Naive thymus-derived CD4-positive, alpha-beta T cell (primary cell): ENCODE measurements at regions of chr1 and their contacts with region 1.

Region 1: GRCh38 chr1:84143796-84144565 is at the start of gene PRKACB:
- DNase-seq: peak in 7 of 9 donors; percentile 59 to 79 (median 70)
- ATAC-seq: peak; percentile 94
- H3K4me3 ChIP-seq: peak within 1 kb of the TSS; percentile 71
- H3K4me3 Mint-ChIP-seq: peak within 1 kb of the TSS; percentile 88 to 100 (median 96)
- H3K27ac ChIP-seq: peak within 1 kb of the TSS; percentile 74
- H3K27ac Mint-ChIP-seq: peak within 1 kb of the TSS; percentile 97 to 100 (median 99)
- H3K4me1 ChIP-seq: peaks cover 27 to 33% of the 10 kb centered on the region in 2 donors
- H3K4me1 Mint-ChIP-seq: peaks cover 17 to 51% (median 39%) of the 10 kb centered on the region in 7 donors
- H3K27me3 ChIP-seq: no peaks in the 10 kb centered on the region
- H3K27me3 Mint-ChIP-seq: no peaks in the 10 kb centered on the region
- total RNA-seq, gene PRKACB: 71.1 to 176 (median 89.3) TPM

Region 2: DNA sequence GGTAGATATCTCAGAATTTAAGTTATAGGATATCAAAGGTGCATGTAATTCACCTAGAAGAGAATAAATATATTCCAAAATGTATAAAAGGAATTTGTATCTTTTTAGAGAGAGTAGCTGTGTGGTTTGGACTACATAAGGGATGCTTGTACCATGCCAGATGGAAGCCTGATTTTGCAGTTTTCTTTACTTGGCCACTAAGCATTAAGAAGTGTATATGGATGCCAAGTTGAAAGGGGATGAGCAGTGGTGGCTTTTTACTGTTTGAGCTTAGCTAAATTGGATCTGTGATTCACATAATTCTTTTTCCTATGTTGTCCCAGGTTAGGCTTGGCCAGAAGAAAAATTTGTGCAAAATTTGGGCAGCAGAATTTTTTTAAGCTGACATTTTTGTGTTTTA is 101.5 kb before region 1 on chr1:
- CTCF ChIA-PET with region 1: no interaction called
- POLR2A ChIA-PET with region 1: no interaction called
- intact Hi-C with region 1: no loop called
- DNase-seq: no peak
- ATAC-seq: no peak
- H3K4me3 ChIP-seq: no peak overlapping the region
- H3K4me3 Mint-ChIP-seq: no peak overlapping the region
- H3K27ac ChIP-seq: no peak overlapping the region
- H3K27ac Mint-ChIP-seq: no peak overlapping the region
- H3K4me1 ChIP-seq: no peaks in the 10 kb centered on the region
- H3K4me1 Mint-ChIP-seq: peaks cover 0 to 2% (median 0%) of the 10 kb centered on the region in 7 donors
- H3K27me3 ChIP-seq: no peaks in the 10 kb centered on the region
- H3K27me3 Mint-ChIP-seq: peaks cover 0 to 17% (median 4%) of the 10 kb centered on the region in 5 donors

Region 3: GRCh38 chr1:84156210-84156621 is 12.2 kb after region 1 on chr1:
- CTCF ChIA-PET with region 1: interaction called, 3 read pairs
- POLR2A ChIA-PET with region 1: interaction called, 4 read pairs
- intact Hi-C with region 1: loop called in 1 of 2 experiments (anchors 1 kb)
- DNase-seq: no peak
- ATAC-seq: peak; percentile 67
- H3K4me3 ChIP-seq: no peak overlapping the region
- H3K4me3 Mint-ChIP-seq: peak overlapping the region in 9 of 10 donors; percentile 6 to 65 (median 55)
- H3K27ac ChIP-seq: no peak overlapping the region
- H3K27ac Mint-ChIP-seq: peak overlapping the region in 3 of 9 donors; percentile 10 to 59 (median 39)
- H3K4me1 ChIP-seq: peaks cover 24 to 62% of the 10 kb centered on the region in 2 donors
- H3K4me1 Mint-ChIP-seq: peaks cover 57 to 99% (median 95%) of the 10 kb centered on the region in 7 donors
- H3K27me3 ChIP-seq: no peaks in the 10 kb centered on the region
- H3K27me3 Mint-ChIP-seq: no peaks in the 10 kb centered on the region

Region 4: DNA sequence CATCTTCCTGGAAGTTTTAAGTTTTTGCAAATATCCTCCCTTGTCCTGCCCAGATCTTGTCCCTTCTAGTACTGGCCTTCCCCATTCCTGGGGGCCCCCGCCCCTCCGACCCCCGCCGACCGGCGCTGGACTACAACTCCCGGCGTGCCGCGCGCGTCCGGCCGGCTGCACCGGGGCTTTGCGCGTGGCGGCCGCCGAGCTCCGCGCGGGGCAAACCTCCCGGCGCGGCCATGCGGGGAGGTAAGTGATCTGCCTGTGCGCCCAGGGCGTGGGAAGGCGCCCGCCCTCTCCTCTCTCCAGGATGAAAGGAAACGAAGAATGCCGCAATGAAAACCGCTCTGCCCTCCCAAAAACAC is 154.3 kb after region 1 on chr1:
- CTCF ChIA-PET with region 1: no interaction called
- POLR2A ChIA-PET with region 1: interaction called, 19 read pairs
- intact Hi-C with region 1: loop called (anchors 1 to 2 kb)
- DNase-seq: peak; percentile 40 to 65 (median 46)
- ATAC-seq: peak; percentile 88
- H3K4me3 ChIP-seq: peak overlapping the region; percentile 92
- H3K4me3 Mint-ChIP-seq: peak overlapping the region; percentile 83 to 95 (median 90)
- H3K27ac ChIP-seq: peak overlapping the region; percentile 69
- H3K27ac Mint-ChIP-seq: peak overlapping the region; percentile 67 to 85 (median 79)
- H3K4me1 ChIP-seq: peaks cover 4 to 25% of the 10 kb centered on the region in 2 donors
- H3K4me1 Mint-ChIP-seq: peaks cover 17 to 52% (median 42%) of the 10 kb centered on the region in 7 donors
- H3K27me3 ChIP-seq: no peaks in the 10 kb centered on the region
- H3K27me3 Mint-ChIP-seq: peaks cover 0 to 16% (median 6%) of the 10 kb centered on the region in 5 donors

Region 5: GRCh38 chr1:84478876-84479868 is 335.2 kb after region 1 on chr1 and contains the start of gene RPF1:
- CTCF ChIA-PET with region 1: no interaction called
- POLR2A ChIA-PET with region 1: interaction called, 5 read pairs
- intact Hi-C with region 1: loop called (anchors 1 kb)
- DNase-seq: peak; percentile 61 to 88 (median 83)
- ATAC-seq: peak; percentile 97
- H3K4me3 ChIP-seq: peak within 1 kb of the TSS; percentile 72
- H3K4me3 Mint-ChIP-seq: peak within 1 kb of the TSS; percentile 88 to 100 (median 98)
- H3K27ac ChIP-seq: peak within 1 kb of the TSS; percentile 80
- H3K27ac Mint-ChIP-seq: peak within 1 kb of the TSS; percentile 98 to 100 (median 99)
- H3K4me1 ChIP-seq: peaks cover 22 to 28% of the 10 kb centered on the region in 2 donors
- H3K4me1 Mint-ChIP-seq: peaks cover 29 to 60% (median 49%) of the 10 kb centered on the region in 7 donors
- H3K27me3 ChIP-seq: peaks cover 0 to 7% of the 10 kb centered on the region in 2 donors
- H3K27me3 Mint-ChIP-seq: peaks cover 21 to 35% (median 26%) of the 10 kb centered on the region in 5 donors
- total RNA-seq, gene RPF1: 35.5 to 52.3 (median 44.1) TPM

Region 6: DNA sequence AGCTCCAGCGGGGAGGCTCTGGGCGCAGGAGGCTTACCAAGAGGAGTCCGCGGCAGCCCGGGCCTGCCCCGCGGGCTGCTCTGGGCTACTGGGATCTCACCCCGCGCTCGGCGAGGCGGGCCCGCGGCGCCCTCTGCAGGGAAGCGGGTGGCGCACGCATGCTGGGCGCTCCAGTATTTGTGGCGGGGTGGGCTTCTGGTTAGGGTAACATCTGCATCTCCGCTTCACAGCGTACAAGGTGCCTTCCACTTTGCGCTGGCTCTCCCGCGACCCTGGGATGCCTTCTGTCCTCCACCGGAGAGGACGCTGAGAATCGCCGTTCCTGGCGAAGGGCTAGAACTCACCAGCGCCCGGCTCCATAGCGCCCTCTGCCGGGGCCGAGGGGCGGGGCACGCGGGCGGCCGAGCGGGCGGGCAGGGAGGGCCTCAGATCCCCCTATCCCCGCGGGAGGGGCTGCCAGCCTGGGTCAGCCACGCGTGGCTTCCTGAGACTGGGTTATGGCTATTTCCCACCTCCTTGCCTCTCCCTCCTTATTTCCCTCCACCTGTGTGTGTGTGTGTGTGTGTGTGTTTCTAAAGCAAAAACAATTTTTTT is 476.8 kb after region 1 on chr1:
- CTCF ChIA-PET with region 1: interaction called, 15 read pairs
- POLR2A ChIA-PET with region 1: interaction called, 4 read pairs
- intact Hi-C with region 1: loop called (anchors 1 kb)
- DNase-seq: peak; percentile 60 to 95 (median 84)
- ATAC-seq: peak; percentile 96
- H3K4me3 ChIP-seq: peak overlapping the region; percentile 85
- H3K4me3 Mint-ChIP-seq: peak overlapping the region; percentile 85 to 97 (median 92)
- H3K27ac ChIP-seq: peak overlapping the region; percentile 68
- H3K27ac Mint-ChIP-seq: peak overlapping the region in 6 of 9 donors; percentile 53 to 89 (median 82)
- H3K4me1 ChIP-seq: peaks cover 0 to 3% of the 10 kb centered on the region in 2 donors
- H3K4me1 Mint-ChIP-seq: peaks cover 0 to 18% (median 5%) of the 10 kb centered on the region in 7 donors
- H3K27me3 ChIP-seq: no peaks in the 10 kb centered on the region
- H3K27me3 Mint-ChIP-seq: peaks cover 0 to 7% (median 0%) of the 10 kb centered on the region in 5 donors

Region 7: GRCh38 chr1:84862810-84863251 is 718.9 kb after region 1 on chr1:
- CTCF ChIA-PET with region 1: no interaction called
- POLR2A ChIA-PET with region 1: no interaction called
- intact Hi-C with region 1: loop called in 1 of 2 experiments (anchors 5 kb)
- DNase-seq: peak in 8 of 9 donors; percentile 42 to 81 (median 66)
- ATAC-seq: peak; percentile 87
- H3K4me3 ChIP-seq: peak overlapping the region; percentile 44
- H3K4me3 Mint-ChIP-seq: peak overlapping the region; percentile 71 to 89 (median 83)
- H3K27ac ChIP-seq: peak overlapping the region; percentile 67
- H3K27ac Mint-ChIP-seq: peak overlapping the region; percentile 83 to 95 (median 92)
- H3K4me1 ChIP-seq: peaks cover 30 to 46% of the 10 kb centered on the region in 2 donors
- H3K4me1 Mint-ChIP-seq: peaks cover 31 to 69% (median 59%) of the 10 kb centered on the region in 7 donors
- H3K27me3 ChIP-seq: no peaks in the 10 kb centered on the region
- H3K27me3 Mint-ChIP-seq: peaks cover 0 to 6% (median 0%) of the 10 kb centered on the region in 5 donors